K562 (cell line): ENCODE measurements at regions of chr11 and their contacts with region 1.

Region 1: DNA sequence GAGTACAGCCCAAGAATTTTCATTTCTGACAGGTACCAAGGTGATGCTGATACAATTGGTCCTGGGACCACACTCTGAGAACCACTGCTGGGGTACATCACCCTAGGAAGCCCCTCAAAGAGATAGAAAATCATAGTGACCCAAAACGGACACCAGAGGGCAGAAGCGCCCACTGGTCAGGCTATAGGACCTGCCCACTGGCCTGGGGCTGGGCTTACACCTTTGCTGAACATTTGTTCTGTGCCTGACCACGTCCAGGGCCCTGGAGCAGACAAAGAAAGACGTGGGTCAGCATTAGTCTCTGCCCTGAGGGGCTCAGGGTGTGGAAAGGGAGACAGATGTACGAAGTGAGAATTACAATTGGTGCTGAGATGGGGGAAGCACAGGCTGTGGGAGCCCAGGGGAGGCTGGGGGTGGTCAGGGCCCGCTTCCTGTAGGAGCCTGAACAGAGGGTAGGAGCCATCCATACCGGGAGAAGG is 14.4 kb upstream of the SERPINH1 start:
- DNase-seq: peak; percentile 82 to 91 (median 87)
- ATAC-seq: peak; percentile 93
- H3K4me3 ChIP-seq: no peak overlapping the region
- H3K27ac ChIP-seq: no peak overlapping the region
- H3K4me1 ChIP-seq: peaks cover 13 to 16% of the 10 kb centered on the region in 2 experiments; a peak in 4 of 5 replicates
- H3K27me3 ChIP-seq: no peaks in the 10 kb centered on the region
- CTCF ChIP-seq: peak; percentile 86 to 95 (median 91)
- EP300 ChIP-seq: peak; percentile 14; the same call in 1 of the 2 replicates
- POLR2A ChIP-seq: no peak
- RAD21 ChIP-seq: peak; percentile 94 to 98

Region 2: DNA sequence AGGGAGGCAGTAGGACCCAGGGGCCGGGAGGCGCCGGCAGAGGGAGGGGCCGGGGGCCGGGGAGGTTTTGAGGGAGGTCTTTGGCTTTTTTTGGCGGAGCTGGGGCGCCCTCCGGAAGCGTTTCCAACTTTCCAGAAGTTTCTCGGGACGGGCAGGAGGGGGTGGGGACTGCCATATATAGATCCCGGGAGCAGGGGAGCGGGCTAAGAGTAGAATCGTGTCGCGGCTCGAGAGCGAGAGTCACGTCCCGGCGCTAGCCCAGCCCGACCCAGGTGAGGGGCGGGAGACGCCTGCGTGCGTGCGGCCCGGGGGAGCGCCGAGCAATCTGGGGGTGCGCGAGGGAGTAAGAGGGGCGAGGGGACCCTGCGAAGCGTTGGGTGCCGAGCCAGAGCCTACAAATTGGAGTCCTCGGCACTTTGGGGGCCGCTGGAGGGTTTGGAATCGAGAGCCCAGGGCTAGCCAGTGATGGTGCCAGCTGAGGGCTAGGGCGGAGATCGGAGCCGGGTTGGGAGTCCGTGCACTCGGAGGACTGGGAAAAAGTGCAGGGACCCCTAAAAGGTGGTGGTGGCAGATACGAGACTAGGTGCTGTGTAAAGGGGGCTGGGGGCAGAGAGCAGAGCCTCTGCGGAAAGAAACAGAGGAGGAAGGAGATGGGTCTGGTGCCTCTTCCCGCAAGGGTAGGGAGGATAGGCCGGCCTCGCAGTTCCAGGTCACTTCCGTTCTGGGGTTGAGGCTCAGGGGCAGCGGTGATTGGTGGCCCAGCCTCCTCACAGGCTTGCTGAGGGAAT is 14.6 kb after region 1 on chr11 and contains the start of gene SERPINH1:
- CTCF ChIA-PET with region 1: no interaction called
- POLR2A ChIA-PET with region 1: interaction called, 6 read pairs
- in situ Hi-C with region 1: no loop called
- intact Hi-C with region 1: loop called (anchors 1 kb)
- DNase-seq: peak; percentile 84 to 93 (median 88)
- ATAC-seq: peak; percentile 86
- H3K4me3 ChIP-seq: peak within 1 kb of the TSS; percentile 64
- H3K27ac ChIP-seq: peak within 1 kb of the TSS; percentile 77
- H3K4me1 ChIP-seq: peaks cover 58 to 69% of the 10 kb centered on the region in 2 experiments
- H3K27me3 ChIP-seq: no peaks in the 10 kb centered on the region
- CTCF ChIP-seq: 0 out of 6 replicates have a peak, but pooled peaks of 1 of the 3 experiments have one; percentile 7
- EP300 ChIP-seq: no peak; the same call in 1 of the 2 replicates
- POLR2A ChIP-seq: peak; percentile 97
- RAD21 ChIP-seq: no peak
- polyA plus RNA-seq, gene SERPINH1: 2.8 to 6.8 TPM

Region 3: DNA sequence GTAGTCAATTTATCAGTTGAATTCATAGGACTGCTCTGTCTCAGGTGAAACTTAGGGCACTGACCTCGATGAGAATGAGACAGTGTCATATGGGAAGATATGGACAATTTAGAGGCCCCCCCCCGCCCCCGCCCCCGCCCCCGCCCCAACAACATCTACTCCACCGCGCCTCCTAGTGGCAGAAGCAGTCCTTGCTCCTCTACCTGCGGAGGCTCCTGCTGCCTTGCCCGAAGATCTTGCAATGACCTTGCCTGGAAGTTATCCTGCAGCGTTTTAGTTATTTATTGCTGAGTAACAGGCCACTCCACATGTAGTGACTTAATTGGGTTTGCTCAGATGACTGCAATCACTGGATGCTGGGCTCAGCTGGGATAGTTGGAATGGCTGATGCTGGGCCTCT is 29.6 kb after region 1 on chr11:
- CTCF ChIA-PET with region 1: interaction called, 7 read pairs
- POLR2A ChIA-PET with region 1: no interaction called
- in situ Hi-C with region 1: loop called (anchors 5 kb)
- intact Hi-C with region 1: loop called (anchors 1 kb)
- DNase-seq: peak; percentile 72 to 85 (median 80)
- ATAC-seq: peak; percentile 69
- H3K4me3 ChIP-seq: no peak overlapping the region
- H3K27ac ChIP-seq: no peak overlapping the region
- H3K4me1 ChIP-seq: peaks cover 8 to 12% of the 10 kb centered on the region in 2 experiments
- H3K27me3 ChIP-seq: no peaks in the 10 kb centered on the region
- CTCF ChIP-seq: peak; percentile 51 to 66 (median 54)
- EP300 ChIP-seq: no peak
- POLR2A ChIP-seq: no peak
- RAD21 ChIP-seq: peak in 1 of 2 experiments; percentile 26; a peak in 2 of 4 replicates

Region 4: DNA sequence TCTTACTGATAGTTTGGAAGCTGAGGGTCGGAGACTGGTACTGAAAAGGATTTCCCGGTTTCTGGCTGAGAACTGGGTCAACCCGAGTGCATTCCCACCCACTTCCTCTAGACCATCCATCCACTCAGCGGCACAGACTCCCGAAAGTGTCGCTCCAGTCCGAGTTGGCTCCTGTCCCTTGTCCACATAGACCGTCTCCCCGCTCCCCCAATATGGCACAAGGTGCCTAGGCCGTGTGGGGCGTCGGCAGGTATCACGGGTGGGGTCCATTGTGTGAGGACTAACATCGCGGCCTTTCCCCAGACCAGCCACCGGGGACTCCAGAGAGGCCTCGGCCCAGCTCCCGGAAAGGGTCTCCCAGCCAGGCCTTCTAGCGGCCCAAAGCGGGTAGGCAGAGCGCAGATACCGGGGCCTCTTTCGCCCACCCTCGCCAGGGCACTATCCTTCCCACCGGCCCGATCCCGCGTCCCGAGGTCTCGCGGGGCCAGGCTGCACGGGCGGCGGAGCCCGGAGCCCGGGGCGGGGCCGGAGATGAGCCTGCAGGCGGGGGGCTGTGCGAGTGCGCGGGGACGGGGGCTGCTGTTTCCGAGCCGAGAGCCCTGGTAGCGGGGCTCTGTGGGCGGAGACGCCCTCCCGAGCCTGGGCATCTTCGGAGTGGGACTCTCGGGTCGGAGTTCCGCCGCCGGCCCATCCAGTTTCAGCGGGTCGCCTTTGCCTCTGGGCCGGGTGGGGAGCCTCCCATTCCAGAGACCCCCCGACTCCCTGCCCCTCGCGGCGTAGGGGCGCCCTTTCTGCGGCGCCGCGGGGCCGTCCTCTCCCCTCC is 35.5 kb after region 1 on chr11:
- CTCF ChIA-PET with region 1: no interaction called
- POLR2A ChIA-PET with region 1: no interaction called
- in situ Hi-C with region 1: loop called (anchors 5 kb)
- intact Hi-C with region 1: no loop called
- DNase-seq: peak; percentile 55 to 78 (median 74)
- ATAC-seq: peak; percentile 90
- H3K4me3 ChIP-seq: peak overlapping the region; percentile 45
- H3K27ac ChIP-seq: peak overlapping the region; percentile 55
- H3K4me1 ChIP-seq: peaks cover 20 to 33% of the 10 kb centered on the region in 2 experiments; a peak in 4 of 5 replicates
- H3K27me3 ChIP-seq: no peaks in the 10 kb centered on the region
- CTCF ChIP-seq: peak; percentile 20 to 28 (median 24); a peak in 3 of 6 replicates
- EP300 ChIP-seq: no peak
- POLR2A ChIP-seq: peak; percentile 58
- RAD21 ChIP-seq: no peak

Region 5: GRCh38 chr11:75592715-75593114 is 45.1 kb after region 1 on chr11:
- CTCF ChIA-PET with region 1: no interaction called
- POLR2A ChIA-PET with region 1: interaction called, 3 read pairs
- in situ Hi-C with region 1: no loop called
- intact Hi-C with region 1: loop called (anchors 5 kb)
- DNase-seq: no peak
- ATAC-seq: no peak
- H3K4me3 ChIP-seq: no peak overlapping the region
- H3K27ac ChIP-seq: no peak overlapping the region
- H3K4me1 ChIP-seq: peaks cover 43 to 48% of the 10 kb centered on the region in 2 experiments; a peak in 4 of 5 replicates
- H3K27me3 ChIP-seq: no peaks in the 10 kb centered on the region
- CTCF ChIP-seq: peak in 1 of 3 experiments; percentile 12; a peak in 1 of 6 replicates
- EP300 ChIP-seq: no peak
- POLR2A ChIP-seq: no peak
- RAD21 ChIP-seq: no peak

Region 6: DNA sequence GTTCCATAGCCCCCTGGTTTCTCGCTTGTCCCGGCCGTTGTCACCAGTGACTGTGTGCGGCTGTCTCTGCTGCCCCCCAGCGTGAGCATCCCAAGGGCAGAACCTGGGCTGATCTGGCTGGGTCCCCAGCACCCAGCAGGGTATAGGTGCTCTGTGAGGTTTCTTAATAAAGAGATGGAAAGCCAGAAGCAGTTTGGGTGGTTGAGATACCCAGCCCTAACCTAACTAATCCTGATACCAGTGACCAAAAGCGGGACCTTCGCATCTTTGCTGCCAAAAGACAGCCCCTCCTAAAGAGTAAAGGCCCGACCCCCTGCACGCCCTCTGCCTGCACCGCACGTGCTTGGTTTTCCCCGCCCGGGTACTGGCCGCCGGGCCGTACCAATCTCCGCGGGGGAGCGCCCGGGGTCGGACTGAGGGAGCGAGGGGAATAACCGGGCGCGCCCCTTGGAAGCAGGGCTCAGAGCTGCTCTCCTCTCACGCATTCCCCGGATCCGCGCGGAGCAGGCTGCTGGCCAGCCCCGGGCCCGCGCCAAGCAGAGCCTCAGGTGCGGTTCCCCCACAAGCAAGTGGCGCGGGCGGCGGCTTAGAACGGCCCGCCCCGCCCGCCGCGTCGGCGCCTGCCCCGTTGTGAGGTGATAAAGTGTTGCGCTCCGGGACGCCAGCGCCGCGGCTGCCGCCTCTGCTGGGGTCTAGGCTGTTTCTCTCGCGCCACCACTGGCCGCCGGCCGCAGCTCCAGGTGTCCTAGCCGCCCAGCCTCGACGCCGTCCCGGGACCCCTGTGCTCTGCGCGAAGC is 220.7 kb after region 1 on chr11 and contains the start of gene DGAT2:
- CTCF ChIA-PET with region 1: no interaction called
- POLR2A ChIA-PET with region 1: no interaction called
- in situ Hi-C with region 1: no loop called
- intact Hi-C with region 1: loop called (anchors 1 kb)
- DNase-seq: peak; percentile 90 to 94 (median 93)
- ATAC-seq: peak; percentile 96
- H3K4me3 ChIP-seq: peak within 1 kb of the TSS; percentile 45
- H3K27ac ChIP-seq: peak within 1 kb of the TSS; percentile 93
- H3K4me1 ChIP-seq: peaks cover 22 to 33% of the 10 kb centered on the region in 2 experiments
- H3K27me3 ChIP-seq: peaks cover 7 to 10% of the 10 kb centered on the region in 2 experiments; a peak in 4 of 5 replicates
- CTCF ChIP-seq: peak; percentile 54 to 86 (median 59)
- EP300 ChIP-seq: no peak
- POLR2A ChIP-seq: no peak
- RAD21 ChIP-seq: peak; percentile 10 to 64; a peak in 3 of 4 replicates
- polyA plus RNA-seq, gene DGAT2: 0.68 to 0.69 TPM